Activated CD4-positive, alpha-beta memory T cell treated with anti-CD3 and anti-CD28 coated beads for 36 hours (primary cell): ENCODE measurements at regions of chr4 and their contacts with region 1.

Region 1: DNA sequence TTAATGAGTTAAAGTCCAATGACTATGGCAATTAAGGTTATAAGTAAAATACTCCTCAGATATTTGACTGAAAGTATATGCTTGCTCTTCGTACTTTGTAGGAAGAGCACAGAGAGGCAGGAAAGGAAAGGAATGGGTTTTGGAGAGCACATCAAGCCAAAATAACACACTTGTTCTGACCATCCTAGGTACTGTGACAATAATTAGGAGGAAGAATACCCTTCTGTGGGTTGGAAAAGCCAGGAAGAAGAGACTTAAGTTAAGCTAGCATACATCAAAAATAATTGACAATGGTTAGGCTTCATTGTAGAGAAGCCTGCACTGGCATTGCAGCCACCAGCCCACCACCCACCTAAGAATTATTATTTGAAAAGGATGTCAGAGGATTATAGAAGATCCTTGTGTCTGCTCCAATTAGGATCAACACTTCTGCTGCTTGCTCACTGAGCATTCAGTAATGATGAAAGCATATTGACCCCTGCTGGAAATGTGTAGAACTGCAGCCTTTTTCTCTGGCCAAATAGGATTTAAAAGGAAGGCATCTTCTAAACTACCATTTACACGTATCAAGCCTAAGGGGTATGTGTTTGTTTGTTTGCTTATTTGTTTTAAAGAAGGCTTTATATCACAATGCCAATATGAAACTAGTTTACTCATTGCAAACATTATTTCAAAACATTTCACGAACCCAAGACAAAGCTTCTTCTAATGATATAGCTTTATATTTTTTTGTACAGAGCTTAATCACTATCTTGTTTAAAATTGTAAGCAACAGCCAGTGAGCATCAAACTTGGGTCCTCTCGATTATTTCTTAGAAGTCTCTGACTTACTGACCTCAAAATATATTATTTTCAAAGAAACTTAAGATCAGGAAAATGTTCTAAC is 286.2 kb upstream of the TET2 start:
- DNase-seq: peak; percentile 39
- H3K4me3 Mint-ChIP-seq: no peak overlapping the region
- H3K27ac Mint-ChIP-seq: no peak overlapping the region
- H3K4me1 Mint-ChIP-seq: no peaks in the 10 kb centered on the region
- H3K27me3 Mint-ChIP-seq: no peaks in the 10 kb centered on the region

Region 2: GRCh38 chr4:104064646-104065577 is 795.6 kb before region 1 on chr4:
- CTCF ChIA-PET with region 1: interaction called, 5 read pairs
- POLR2A ChIA-PET with region 1: no interaction called
- intact Hi-C with region 1: loop called (anchors 1 kb)
- DNase-seq: peak; percentile 17
- H3K4me3 Mint-ChIP-seq: no peak overlapping the region
- H3K27ac Mint-ChIP-seq: no peak overlapping the region
- H3K4me1 Mint-ChIP-seq: no peaks in the 10 kb centered on the region
- H3K27me3 Mint-ChIP-seq: no peaks in the 10 kb centered on the region

Region 3: GRCh38 chr4:104693599-104694201 is 166.8 kb before region 1 on chr4:
- CTCF ChIA-PET with region 1: no interaction called
- POLR2A ChIA-PET with region 1: no interaction called
- intact Hi-C with region 1: loop called (anchors 1 kb)
- DNase-seq: no peak
- H3K4me3 Mint-ChIP-seq: no peak overlapping the region
- H3K27ac Mint-ChIP-seq: no peak overlapping the region
- H3K4me1 Mint-ChIP-seq: no peaks in the 10 kb centered on the region
- H3K27me3 Mint-ChIP-seq: peaks cover 1% of the 10 kb centered on the region

Region 4: GRCh38 chr4:104795264-104795939 is 65.1 kb before region 1 on chr4:
- CTCF ChIA-PET with region 1: no interaction called
- POLR2A ChIA-PET with region 1: no interaction called
- intact Hi-C with region 1: no loop called
- DNase-seq: no peak
- H3K4me3 Mint-ChIP-seq: no peak overlapping the region
- H3K27ac Mint-ChIP-seq: no peak overlapping the region
- H3K4me1 Mint-ChIP-seq: no peaks in the 10 kb centered on the region
- H3K27me3 Mint-ChIP-seq: no peaks in the 10 kb centered on the region

Region 5: GRCh38 chr4:105990939-105991338 is 1130.5 kb after region 1 on chr4:
- CTCF ChIA-PET with region 1: no interaction called
- POLR2A ChIA-PET with region 1: no interaction called
- intact Hi-C with region 1: no loop called
- DNase-seq: no peak
- H3K4me3 Mint-ChIP-seq: no peak overlapping the region
- H3K27ac Mint-ChIP-seq: no peak overlapping the region
- H3K4me1 Mint-ChIP-seq: no peaks in the 10 kb centered on the region
- H3K27me3 Mint-ChIP-seq: no peaks in the 10 kb centered on the region